Posterior vena cava (tissue), 2 donors: ENCODE measurements at regions of chr22 and their contacts with region 1.

Region 1: DNA sequence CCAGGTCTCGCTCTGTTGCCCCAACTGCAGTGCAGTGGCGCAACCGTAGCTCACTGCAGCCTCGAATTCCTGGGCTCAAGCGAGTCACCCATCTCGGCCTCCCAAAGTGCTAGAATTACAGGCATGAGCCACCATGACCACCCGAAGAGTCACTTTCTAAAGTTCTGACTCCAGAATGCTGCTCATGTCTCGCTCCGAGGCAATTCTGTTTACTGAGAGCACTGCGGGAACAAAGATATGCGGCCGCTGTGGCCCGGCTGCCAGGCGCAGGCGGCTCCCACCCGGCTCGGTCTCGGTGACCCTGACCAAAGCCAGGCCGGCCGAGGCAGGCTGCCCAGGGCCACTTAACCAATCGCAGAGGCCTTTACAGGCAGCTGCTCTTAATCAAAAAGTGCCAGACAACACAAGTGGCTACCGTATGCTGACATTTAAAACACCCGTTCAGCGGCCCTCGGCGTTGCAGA is 78.7 kb downstream of the PHF21B start:
- DNase-seq: no peak

Region 2: GRCh38 chr22:43969989-43970755 is 960.9 kb before region 1 on chr22:
- intact Hi-C with region 1: no loop called
- DNase-seq: no peak

Region 3: GRCh38 chr22:46894081-46894671 is 1963.1 kb after region 1 on chr22:
- intact Hi-C with region 1: loop called in 1 of 2 experiments (anchors 5 kb)
- DNase-seq: no peak